ENCODE measurements at regions of chr18 and their contacts with region 1.

Region 1: DNA sequence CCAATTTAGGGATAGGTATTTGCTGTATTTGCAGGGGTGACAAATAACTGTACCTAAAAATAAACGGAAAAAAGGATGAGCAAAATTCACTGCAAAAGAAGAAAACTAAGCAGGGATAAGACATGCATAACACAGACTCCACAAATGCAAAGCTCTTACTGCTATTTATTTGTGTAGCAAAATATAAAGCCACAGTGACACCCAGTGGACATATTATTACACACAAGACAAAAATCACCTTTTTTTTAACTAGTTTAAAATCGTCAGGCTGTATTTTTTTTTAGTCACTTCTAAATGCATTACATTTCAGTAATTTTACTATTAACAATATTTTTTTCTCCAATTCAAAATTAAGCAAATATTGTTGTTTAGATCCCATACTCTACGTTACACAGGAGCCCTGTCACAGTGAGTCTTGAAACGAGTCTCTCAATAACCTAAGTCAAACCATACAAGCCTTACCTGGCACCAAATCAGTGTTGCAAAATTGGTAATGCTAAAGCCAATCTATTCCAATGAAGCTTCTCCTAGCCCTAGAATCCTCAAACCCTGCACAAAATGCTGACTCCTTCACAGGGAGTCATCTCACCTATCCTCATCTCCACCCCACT is 23.7 kb downstream of the METTL4 start:
- DNase-seq: no peak
- ATAC-seq: no peak

Region 2: GRCh38 chr18:864872-865273 is 1682.7 kb before region 1 on chr18:
- intact Hi-C with region 1: loop called (anchors 5 kb)
- DNase-seq: peak; percentile 76
- ATAC-seq: peak; percentile 79

Region 3: DNA sequence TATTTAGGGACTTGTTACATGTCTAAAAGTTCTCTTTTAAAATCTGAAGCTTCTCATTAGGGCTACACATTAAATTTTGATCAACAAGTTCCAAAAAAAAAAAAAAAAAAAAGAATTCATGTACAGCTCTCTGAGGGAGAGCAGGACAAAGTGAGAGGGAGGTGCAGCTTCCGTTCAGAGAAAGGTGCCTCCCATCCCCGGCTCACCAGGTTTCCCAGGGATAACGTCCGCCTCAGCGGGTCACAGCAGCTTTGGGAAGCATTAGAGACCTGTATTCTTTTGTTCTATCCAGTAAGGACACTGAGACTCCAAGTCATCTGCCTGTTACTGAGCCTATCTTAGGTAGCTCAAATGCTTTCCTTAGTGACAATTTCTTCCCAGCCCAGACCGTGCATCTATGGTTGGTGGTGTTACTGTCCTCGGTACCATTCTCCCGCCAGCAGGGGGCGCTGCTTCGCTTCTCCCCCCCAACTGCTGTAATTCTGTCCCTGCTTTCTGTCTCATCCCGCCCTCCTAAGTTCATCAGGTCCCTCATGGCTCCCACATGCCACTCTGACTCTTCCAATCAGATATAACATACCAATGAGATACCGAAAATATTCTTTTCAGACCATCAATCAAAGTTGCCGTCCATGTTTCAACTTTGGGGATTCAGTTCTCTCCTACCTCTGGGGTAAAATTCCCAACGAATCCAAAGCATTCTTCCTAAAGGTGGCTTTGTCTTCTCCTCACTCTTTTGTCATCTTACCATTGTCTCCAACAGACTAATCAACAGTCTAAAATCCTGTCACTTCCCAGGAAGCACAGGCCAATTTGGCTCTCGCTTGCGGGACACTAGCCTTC is 442.7 kb before region 1 on chr18:
- intact Hi-C with region 1: loop called (anchors 5 kb)
- DNase-seq: no peak
- ATAC-seq: peak; percentile 57

Region 4: GRCh38 chr18:2337552-2338141 is 209.9 kb before region 1 on chr18:
- intact Hi-C with region 1: loop called (anchors 5 kb)
- DNase-seq: no peak
- ATAC-seq: no peak

Measured in Right ventricle myocardium inferior (tissue), 1 donor.